Caco-2 (cell line): ENCODE measurements at regions of chr14 and their contacts with region 1.

Region 1: GRCh38 chr14:51059044-51059443 is 35.9 kb downstream of the TRIM9 start:
- DNase-seq: no peak
- H3K4me3 ChIP-seq: no peak overlapping the region
- H3K4me3 Mint-ChIP-seq: no peak overlapping the region
- H3K27ac Mint-ChIP-seq: no peak overlapping the region
- H3K4me1 ChIP-seq: no peaks in the 10 kb centered on the region
- H3K4me1 Mint-ChIP-seq: no peaks in the 10 kb centered on the region
- H3K27me3 ChIP-seq: no peaks in the 10 kb centered on the region
- H3K27me3 Mint-ChIP-seq: no peaks in the 10 kb centered on the region
- CTCF ChIP-seq: no peak

Region 2: GRCh38 chr14:51107801-51108200 is 48.8 kb after region 1 on chr14:
- CTCF ChIA-PET with region 1: interaction called, 10 read pairs
- POLR2A ChIA-PET with region 1: no interaction called
- intact Hi-C with region 1: no loop called
- DNase-seq: no peak
- H3K4me3 ChIP-seq: no peak overlapping the region
- H3K4me3 Mint-ChIP-seq: no peak overlapping the region
- H3K27ac Mint-ChIP-seq: no peak overlapping the region
- H3K4me1 ChIP-seq: peaks cover 4% of the 10 kb centered on the region
- H3K4me1 Mint-ChIP-seq: no peaks in the 10 kb centered on the region
- H3K27me3 ChIP-seq: no peaks in the 10 kb centered on the region
- H3K27me3 Mint-ChIP-seq: peaks cover 9% of the 10 kb centered on the region
- CTCF ChIP-seq: no peak